ENCODE measurements at regions of chr17 and their contacts with region 1.

Region 1: GRCh38 chr17:67942810-67943209 is 53.5 kb downstream of the C17orf58 start:
- DNase-seq: peak; percentile 8 to 42 (median 26)
- H3K4me3 ChIP-seq: no peak overlapping the region
- H3K27ac ChIP-seq: no peak overlapping the region
- H3K4me1 ChIP-seq: no peaks in the 10 kb centered on the region
- H3K27me3 ChIP-seq: no peaks in the 10 kb centered on the region

Region 2: GRCh38 chr17:67931233-67931632 is 11.6 kb before region 1 on chr17:
- CTCF ChIA-PET with region 1: interaction called, 25 read pairs
- POLR2A ChIA-PET with region 1: interaction called, 4 read pairs
- DNase-seq: no peak
- H3K4me3 ChIP-seq: no peak overlapping the region
- H3K27ac ChIP-seq: no peak overlapping the region
- H3K4me1 ChIP-seq: peaks cover 0 to 16% (median 2%) of the 10 kb centered on the region in 4 experiments
- H3K27me3 ChIP-seq: no peaks in the 10 kb centered on the region

Region 3: GRCh38 chr17:67959288-67959900 is 16.6 kb after region 1 on chr17:
- CTCF ChIA-PET with region 1: interaction called, 13 read pairs
- POLR2A ChIA-PET with region 1: no interaction called
- DNase-seq: peak in 1 of 3 donors; percentile 4
- H3K4me3 ChIP-seq: no peak overlapping the region
- H3K27ac ChIP-seq: no peak overlapping the region
- H3K4me1 ChIP-seq: peaks cover 0 to 3% (median 0%) of the 10 kb centered on the region in 4 experiments
- H3K27me3 ChIP-seq: no peaks in the 10 kb centered on the region

Region 4: GRCh38 chr17:67993596-67994361 is 51.0 kb after region 1 on chr17:
- CTCF ChIA-PET with region 1: no interaction called
- POLR2A ChIA-PET with region 1: no interaction called
- DNase-seq: peak in 2 of 3 donors; percentile 20 to 48
- H3K4me3 ChIP-seq: peak overlapping the region; percentile 64 to 85 (median 75)
- H3K27ac ChIP-seq: peak overlapping the region in 1 of 2 experiments; percentile 74
- H3K4me1 ChIP-seq: peaks cover 5 to 33% (median 27%) of the 10 kb centered on the region in 4 experiments
- H3K27me3 ChIP-seq: peaks cover 0 to 21% (median 8%) of the 10 kb centered on the region in 5 experiments

Measured in common myeloid progenitor, CD34-positive (primary cell).